AG04450 (cell line): ENCODE measurements at regions of chr1 and their contacts with region 1.

Region 1: DNA sequence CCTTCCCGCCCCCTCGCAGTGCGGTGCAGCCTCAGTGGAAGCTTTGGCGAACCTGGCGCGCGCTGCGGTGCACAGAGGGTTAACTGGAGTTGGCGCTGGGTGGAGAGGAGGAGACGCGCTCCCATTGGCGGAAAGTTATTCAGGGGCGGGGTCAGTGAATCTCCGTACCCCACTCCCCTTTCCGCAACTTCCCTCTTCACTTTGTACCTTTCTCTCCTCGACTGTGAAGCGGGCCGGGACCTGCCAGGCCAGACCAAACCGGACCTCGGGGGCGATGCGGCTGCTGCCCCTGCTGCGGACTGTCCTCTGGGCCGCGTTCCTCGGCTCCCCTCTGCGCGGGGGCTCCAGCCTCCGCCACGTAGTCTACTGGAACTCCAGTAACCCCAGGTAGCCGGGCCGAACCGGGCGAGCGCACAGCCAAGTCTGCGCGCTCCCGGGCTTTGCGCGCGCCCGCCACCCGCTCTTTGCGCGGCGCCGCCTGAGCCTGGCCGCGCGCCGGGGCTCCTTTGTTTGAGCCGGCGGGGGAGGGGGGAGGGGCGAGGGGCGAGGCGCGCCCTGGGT is at the start of gene EFNA4:
- DNase-seq: peak; percentile 36
- H3K4me3 ChIP-seq: peak within 1 kb of the TSS; percentile 96
- H3K27ac ChIP-seq: peak within 1 kb of the TSS; percentile 80
- H3K27me3 ChIP-seq: no peaks in the 10 kb centered on the region
- CTCF ChIP-seq: no peak
- polyA plus RNA-seq, gene EFNA4: 10.1 and 12.9 TPM in 2 replicates

Region 2: DNA sequence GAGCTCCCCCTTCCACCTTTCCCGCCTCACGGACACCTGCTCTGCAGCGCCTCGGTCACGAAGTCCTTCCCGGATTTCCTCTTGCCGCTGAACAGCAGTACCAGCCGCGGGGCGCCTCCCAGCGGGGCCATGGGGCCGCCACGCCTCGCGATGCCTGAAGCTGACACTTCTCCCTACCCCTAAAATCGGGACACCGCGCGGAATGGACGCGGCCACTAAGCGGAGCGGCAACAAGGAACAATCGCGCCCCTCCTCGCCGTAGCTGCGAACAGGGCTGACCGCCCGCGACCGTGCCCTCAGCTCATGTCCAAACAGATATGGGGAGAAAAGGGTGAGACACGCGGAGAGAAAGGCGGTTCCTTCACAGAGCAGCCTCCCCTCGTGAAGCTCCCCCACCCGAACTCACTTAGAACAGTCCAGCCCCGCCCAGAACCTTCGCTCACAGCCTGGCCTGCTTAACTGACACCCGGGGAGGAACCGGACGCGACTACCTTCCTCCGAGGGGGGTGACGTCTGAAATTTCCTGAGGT is 127.0 kb before region 1 on chr1 and contains the start of gene PMVK:
- CTCF ChIA-PET with region 1: interaction called, 12 read pairs
- POLR2A ChIA-PET with region 1: no interaction called
- DNase-seq: peak; percentile 91
- H3K4me3 ChIP-seq: peak within 1 kb of the TSS; percentile 72
- H3K27ac ChIP-seq: peak within 1 kb of the TSS; percentile 99
- H3K27me3 ChIP-seq: peaks cover 2% of the 10 kb centered on the region
- CTCF ChIP-seq: peak; percentile 42
- polyA plus RNA-seq, gene PMVK: 21.0 and 24.7 TPM in 2 replicates

Region 3: DNA sequence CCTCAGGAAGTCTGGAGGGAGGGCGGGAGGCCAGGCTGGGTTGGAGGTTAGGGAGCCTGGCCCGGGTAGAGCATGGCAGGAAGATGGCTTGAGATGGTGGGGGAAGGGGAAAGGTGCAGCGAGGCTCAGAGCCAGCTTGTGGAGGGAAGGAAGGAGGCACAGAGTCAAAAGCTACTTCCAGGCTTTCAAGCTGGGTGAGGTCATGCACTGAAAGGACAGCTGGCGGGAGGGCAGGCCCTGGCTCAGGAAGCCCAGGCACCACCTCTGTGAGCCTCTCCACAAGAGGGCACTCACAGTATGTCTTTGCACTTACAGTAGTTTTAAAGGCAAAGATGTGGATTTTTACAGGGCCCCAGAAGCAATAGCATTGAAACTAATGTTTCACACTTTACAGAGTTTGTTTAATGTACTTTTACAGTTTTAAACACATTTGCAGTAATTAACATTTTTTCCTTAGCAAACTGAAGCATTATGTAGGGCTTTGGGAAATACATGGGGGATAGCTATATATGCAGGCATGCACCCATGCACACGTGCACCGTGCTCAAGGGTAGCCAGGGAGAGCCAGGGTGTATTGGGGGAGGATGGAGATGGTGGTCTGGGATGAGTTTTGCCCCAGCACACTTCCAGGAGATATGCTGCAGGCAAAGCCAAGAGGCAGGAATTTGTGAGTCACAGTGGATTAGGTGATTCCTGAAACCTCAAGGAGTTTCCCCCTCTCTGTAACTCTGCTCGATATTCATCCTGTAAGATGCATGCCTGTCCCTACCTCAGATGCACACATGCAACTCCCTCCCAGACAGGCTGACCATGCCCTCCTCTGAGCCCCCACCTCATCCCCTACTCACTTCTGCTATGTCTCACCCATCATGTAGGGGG is 18.6 kb before region 1 on chr1:
- CTCF ChIA-PET with region 1: interaction called, 29 read pairs
- POLR2A ChIA-PET with region 1: no interaction called
- DNase-seq: peak; percentile 45
- H3K4me3 ChIP-seq: no peak overlapping the region
- H3K27ac ChIP-seq: no peak overlapping the region
- H3K27me3 ChIP-seq: peaks cover 9% of the 10 kb centered on the region
- CTCF ChIP-seq: peak; percentile 75

Region 4: DNA sequence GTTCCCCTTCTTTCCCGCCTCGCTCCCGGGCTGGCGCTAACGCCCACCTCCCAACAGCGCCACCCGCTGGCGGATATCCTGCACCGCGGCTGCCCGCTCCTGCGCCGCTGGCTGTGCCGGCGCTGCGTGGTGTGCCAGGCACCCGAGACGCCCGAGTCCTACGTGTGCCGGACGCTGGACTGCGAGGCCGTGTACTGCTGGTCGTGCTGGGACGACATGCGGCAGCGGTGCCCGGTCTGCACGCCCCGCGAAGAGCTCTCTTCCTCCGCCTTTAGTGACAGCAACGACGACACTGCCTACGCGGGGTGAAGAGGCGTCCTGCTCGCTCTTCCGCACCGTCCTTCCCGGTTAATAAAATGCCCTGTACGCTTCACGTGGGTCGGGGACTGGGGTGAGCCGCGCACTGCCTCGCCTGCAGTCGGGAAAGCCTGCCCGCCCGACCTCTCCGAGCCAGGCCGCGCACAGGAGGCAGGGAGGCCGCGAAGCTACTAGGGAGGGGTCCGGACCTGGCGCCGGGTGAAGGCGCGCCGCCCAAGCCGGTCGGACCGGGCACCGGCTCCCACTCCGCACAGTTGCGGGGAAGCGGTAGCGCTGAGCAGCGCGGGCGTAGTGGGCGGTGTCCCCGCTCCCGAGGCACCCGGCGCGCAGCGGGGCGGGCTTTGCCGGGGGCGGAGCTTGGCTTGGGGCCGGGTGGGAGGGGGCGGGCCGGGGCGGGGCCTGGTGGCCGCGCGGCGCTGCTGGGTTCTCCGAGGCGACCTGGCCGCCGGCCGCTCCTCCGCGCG is 12.9 kb before region 1 on chr1 and contains the start of gene ADAM15:
- CTCF ChIA-PET with region 1: interaction called, 29 read pairs
- POLR2A ChIA-PET with region 1: no interaction called
- DNase-seq: no peak
- H3K4me3 ChIP-seq: peak within 1 kb of the TSS; percentile 73
- H3K27ac ChIP-seq: peak within 1 kb of the TSS; percentile 31
- H3K27me3 ChIP-seq: no peaks in the 10 kb centered on the region
- CTCF ChIP-seq: peak; percentile 77
- polyA plus RNA-seq, gene ADAM15: 25.9 and 37.5 TPM in 2 replicates

Region 5: GRCh38 chr1:155185351-155186066 is 121.9 kb after region 1 on chr1:
- CTCF ChIA-PET with region 1: no interaction called
- POLR2A ChIA-PET with region 1: no interaction called
- DNase-seq: no peak
- H3K4me3 ChIP-seq: no peak overlapping the region
- H3K27ac ChIP-seq: no peak overlapping the region
- H3K27me3 ChIP-seq: no peaks in the 10 kb centered on the region
- CTCF ChIP-seq: no peak